Heart left ventricle (tissue), 16 donors: ENCODE measurements at regions of chr7 and their contacts with region 1.

Region 1: DNA sequence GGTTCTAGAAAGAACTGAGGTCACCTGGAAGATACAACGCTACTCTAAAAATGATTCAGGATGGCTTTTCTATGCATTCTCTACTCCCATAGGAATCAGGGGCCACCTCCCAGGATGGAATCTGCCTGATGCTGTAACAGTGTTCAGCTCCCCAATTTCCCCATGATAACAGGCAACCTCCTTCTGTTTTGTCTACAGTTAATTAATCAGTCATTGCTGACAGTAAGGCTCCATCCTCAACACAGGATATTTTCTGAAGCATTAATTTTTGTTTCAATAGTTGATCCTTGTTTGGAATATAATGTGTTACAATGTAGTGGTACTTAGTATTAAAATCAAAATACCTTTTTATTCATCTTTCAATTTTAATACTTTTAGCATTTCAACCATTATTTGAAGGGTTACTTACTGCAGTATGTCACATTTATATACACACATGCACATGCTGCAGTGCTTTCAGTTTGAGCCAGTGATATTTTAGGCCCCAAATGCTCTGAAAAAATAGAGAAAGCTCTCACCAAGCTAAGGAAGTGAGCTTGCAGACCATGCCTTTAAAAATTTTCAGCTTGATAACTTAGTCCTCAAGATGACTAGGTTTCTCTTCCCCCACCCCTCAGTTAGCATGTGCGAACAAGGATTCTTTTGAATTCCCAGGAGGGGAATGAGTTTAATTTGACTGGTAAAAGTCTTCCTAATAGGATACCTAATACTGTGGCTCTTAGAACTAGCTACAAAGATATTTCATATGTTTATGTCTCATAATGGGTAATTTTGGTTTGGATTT is 592 bp upstream of the PIK3CG start:
- DNase-seq: no peak
- ATAC-seq: no peak
- H3K4me3 ChIP-seq: peak overlapping the region in 9 of 12 donors; percentile 12 to 64 (median 55)
- H3K27ac ChIP-seq: peak overlapping the region in 9 of 12 donors; percentile 19 to 90 (median 62)
- H3K4me1 ChIP-seq: peaks cover 0 to 61% (median 7%) of the 10 kb centered on the region in 12 donors
- H3K27me3 ChIP-seq: no peaks in the 10 kb centered on the region
- CTCF ChIP-seq: no peak
- POLR2A ChIP-seq: no peak

Region 2: DNA sequence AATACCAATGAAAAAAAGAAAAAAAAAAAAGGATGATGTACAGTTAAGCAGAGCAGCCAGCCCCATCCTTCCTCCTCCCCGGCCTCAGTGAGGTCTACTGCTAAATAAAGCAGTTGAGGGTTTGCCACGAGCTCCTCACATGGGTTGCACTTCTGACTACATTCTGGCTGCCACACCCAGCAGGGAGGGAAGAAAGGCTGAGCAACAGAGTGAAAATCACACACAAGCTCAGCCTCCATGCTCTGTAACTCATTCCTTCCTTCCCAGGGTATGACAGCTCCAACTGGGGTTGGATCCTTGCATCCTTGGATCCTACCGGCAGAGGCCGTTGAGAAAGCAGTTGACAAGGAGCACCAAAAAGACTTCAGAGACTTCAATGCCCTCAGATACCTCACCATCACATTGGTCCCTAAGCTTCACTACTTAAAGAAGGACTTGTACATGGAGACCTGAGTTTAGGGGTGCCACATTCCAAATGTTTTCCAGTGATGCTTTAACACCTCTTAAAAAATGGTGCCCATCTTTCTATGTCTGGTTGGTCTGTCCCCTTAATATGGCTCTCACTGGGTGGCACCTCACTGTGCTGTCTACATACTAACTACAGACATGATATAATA is 52.4 kb before region 1 on chr7:
- intact Hi-C with region 1: loop called in 1 of 10 experiments (anchors 5 kb)
- DNase-seq: peak in 3 of 5 donors; percentile 26 to 48 (median 26)
- ATAC-seq: peak; percentile 43 to 87 (median 71)
- H3K4me3 ChIP-seq: no peak overlapping the region
- H3K27ac ChIP-seq: no peak overlapping the region
- H3K4me1 ChIP-seq: peaks cover 0 to 11% (median 2%) of the 10 kb centered on the region in 12 donors
- H3K27me3 ChIP-seq: no peaks in the 10 kb centered on the region
- CTCF ChIP-seq: no peak
- POLR2A ChIP-seq: no peak

Region 3: DNA sequence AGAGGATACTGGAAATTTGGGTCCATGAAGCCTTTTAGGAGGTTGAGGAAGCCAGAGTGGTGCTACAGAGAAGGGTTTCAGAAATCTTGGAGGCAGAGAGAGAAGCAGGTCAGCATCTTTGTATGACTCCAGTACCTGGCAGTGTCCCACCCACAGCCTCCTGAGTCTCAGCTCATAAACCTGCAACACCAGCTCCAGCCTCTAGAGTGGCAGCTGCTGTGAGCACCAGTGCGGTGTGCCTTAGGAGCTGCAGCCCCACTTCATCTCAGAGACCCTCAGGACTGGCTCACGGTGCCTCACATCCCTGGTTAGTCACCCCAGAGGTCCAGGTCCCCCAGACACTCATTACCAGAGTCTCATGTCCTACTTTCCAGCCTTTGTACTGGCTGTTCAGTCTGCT is 95.3 kb after region 1 on chr7:
- intact Hi-C with region 1: no loop called
- DNase-seq: no peak
- ATAC-seq: no peak
- H3K4me3 ChIP-seq: no peak overlapping the region
- H3K27ac ChIP-seq: no peak overlapping the region
- H3K4me1 ChIP-seq: no peaks in the 10 kb centered on the region
- H3K27me3 ChIP-seq: no peaks in the 10 kb centered on the region
- CTCF ChIP-seq: no peak
- POLR2A ChIP-seq: no peak